GM10248 (cell line): ENCODE measurements at regions of chr15 and their contacts with region 1.

Region 1: DNA sequence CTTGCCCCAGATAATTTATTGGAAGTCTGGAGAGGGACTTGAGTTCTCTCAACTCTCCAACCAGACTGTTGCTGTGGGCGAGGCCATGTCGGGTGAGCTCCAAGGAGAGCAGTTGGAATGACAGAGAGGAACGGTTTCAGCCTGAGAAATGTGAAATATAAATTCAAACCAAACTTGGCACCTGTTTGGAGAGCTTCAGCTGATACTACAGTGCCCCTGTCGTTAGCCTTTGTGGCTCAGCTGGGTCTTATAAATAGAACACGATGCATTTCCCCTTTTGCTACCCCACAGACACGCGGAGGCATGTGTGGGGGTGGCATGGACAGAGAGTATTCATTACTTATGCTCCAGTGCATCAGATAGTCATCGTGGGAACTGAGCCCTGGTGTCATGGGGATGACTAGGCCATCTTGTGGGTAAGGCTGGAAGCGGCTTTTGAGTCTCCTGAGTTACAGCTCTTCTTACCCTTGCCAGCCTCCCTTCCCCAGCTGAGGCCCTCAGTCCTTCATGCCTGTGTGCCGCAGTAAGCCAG is 15.6 kb downstream of the SMAD3 start:
- DNase-seq: peak; percentile 80
- CTCF ChIP-seq: peak; percentile 38

Region 2: DNA sequence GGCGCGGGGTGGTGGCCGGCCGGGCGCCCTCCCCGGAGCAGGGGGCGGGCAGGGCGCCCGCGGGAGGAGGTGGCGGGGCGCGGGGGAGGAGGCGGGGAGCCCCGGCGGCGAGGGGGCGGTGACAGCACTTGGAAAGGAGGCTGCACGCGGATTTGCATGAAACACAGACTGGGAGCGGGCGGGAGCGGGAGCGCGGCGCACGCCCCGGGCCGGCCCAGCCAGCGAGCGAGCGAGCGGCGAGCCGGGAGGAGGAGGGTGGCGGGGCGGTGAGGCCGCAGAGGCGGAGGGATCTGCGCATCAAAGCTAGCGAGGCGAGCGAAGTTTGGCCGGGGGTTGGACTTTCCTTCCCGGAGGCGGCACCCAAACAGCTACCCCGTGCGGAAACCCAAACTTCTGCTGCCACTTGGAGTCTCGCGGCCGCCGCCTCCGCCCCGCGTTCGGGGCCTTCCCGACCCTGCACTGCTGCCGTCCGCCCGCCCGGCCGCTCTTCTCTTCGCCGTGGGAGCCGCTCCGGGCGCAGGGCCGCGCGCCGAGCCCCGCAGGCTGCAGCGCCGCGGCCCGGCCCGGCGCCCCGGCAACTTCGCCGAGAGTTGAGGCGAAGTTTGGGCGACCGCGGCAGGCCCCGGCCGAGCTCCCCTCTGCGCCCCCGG is 15.4 kb before region 1 on chr15 and contains the start of gene SMAD3:
- CTCF ChIA-PET with region 1: interaction called, 34 read pairs
- POLR2A ChIA-PET with region 1: interaction called, 5 read pairs
- DNase-seq: peak; percentile 85
- CTCF ChIP-seq: no peak

Region 3: GRCh38 chr15:67101911-67102598 is 21.1 kb after region 1 on chr15:
- CTCF ChIA-PET with region 1: interaction called, 22 read pairs
- POLR2A ChIA-PET with region 1: interaction called, 15 read pairs
- DNase-seq: peak; percentile 65
- CTCF ChIP-seq: no peak